ENCODE measurements at regions of chr2 and their contacts with region 1.

Region 1: GRCh38 chr2:241074901-241075540 is 27.1 kb downstream of the MTERF4 start:
- DNase-seq: peak in 1 of 9 experiments; percentile 42
- ATAC-seq: no peak
- H3K4me3 ChIP-seq: no peak overlapping the region
- H3K4me3 Mint-ChIP-seq: no peak overlapping the region
- H3K27ac ChIP-seq: no peak overlapping the region
- H3K27ac Mint-ChIP-seq: peak overlapping the region; percentile 10
- H3K4me1 ChIP-seq: peaks cover 3% of the 10 kb centered on the region
- H3K4me1 Mint-ChIP-seq: peaks cover 13% of the 10 kb centered on the region
- H3K27me3 ChIP-seq: no peaks in the 10 kb centered on the region
- H3K27me3 Mint-ChIP-seq: no peaks in the 10 kb centered on the region
- CTCF ChIP-seq: no peak

Region 2: DNA sequence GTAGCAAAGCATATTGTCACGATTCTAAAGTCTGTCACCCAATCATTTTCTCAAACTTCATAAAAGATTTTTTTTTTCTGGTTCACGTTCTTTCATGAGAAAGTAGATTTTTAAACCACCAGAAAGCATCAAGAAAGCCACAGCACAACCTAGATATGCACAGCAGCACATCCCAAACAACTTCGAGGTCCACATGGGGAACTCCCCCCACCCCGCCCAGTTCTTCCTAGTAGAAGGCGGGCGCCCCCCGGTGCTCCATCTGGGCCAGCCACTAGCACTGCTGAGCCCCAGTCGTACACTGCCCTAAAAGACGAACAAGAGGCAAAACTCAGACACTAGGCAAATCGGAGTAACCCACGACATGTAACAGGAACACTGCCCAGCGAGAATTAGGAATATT is 225.0 kb after region 1 on chr2:
- CTCF ChIA-PET with region 1: no interaction called
- POLR2A ChIA-PET with region 1: no interaction called
- intact Hi-C with region 1: loop called (anchors 1 to 5 kb)
- DNase-seq: peak in 8 of 9 experiments; percentile 22 to 83 (median 68)
- ATAC-seq: peak; percentile 94
- H3K4me3 ChIP-seq: no peak overlapping the region
- H3K4me3 Mint-ChIP-seq: peak overlapping the region; percentile 56
- H3K27ac ChIP-seq: no peak overlapping the region
- H3K27ac Mint-ChIP-seq: peak overlapping the region; percentile 77
- H3K4me1 ChIP-seq: peaks cover 23% of the 10 kb centered on the region
- H3K4me1 Mint-ChIP-seq: peaks cover 66% of the 10 kb centered on the region
- H3K27me3 ChIP-seq: no peaks in the 10 kb centered on the region
- H3K27me3 Mint-ChIP-seq: no peaks in the 10 kb centered on the region
- CTCF ChIP-seq: peak; percentile 37

Region 3: DNA sequence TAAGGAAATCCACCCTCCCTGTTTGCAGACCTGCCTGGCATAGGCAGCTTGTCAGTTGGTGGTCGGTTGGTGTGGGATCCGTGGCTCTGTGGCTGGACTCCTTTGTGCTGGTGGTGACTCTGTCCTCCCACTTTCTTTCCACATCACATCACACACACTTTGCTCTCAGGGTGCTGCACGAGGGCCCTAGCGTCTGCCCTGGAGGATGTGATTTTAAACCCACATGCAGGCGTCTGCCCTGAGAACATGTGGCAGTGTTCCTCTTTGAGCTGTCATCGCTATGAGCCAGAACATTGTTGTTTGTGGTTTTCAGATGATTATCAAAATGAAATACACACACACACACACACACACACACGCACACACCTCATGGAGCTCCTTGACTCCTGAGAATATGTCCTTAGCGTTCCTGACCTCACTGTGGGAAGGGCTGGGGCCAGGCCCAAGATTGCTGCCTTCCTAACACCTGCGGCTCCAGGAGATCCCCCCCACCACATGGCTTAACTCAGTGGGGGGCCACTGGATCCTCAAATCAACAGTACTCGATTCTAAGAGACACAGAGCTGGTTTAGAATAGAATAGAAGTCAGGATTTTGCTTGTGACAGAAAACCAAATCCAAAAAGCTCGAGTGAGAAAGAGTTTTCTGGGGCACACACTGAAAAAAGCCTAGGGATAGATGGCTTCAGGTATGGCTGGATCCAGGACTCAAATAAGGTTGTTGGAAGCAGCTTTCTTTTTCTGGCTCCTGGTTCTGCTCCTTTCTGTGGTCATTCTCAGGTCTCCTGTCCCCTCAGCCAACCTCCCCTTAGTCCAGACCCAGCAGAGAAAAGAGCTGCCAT is 849.3 kb after region 1 on chr2:
- CTCF ChIA-PET with region 1: no interaction called
- POLR2A ChIA-PET with region 1: no interaction called
- intact Hi-C with region 1: no loop called
- DNase-seq: no peak
- ATAC-seq: no peak
- H3K4me3 ChIP-seq: no peak overlapping the region
- H3K4me3 Mint-ChIP-seq: no peak overlapping the region
- H3K27ac ChIP-seq: no peak overlapping the region
- H3K27ac Mint-ChIP-seq: no peak overlapping the region
- H3K4me1 ChIP-seq: no peaks in the 10 kb centered on the region
- H3K4me1 Mint-ChIP-seq: no peaks in the 10 kb centered on the region
- H3K27me3 ChIP-seq: no peaks in the 10 kb centered on the region
- H3K27me3 Mint-ChIP-seq: no peaks in the 10 kb centered on the region
- CTCF ChIP-seq: no peak

Measured in CD8-positive, alpha-beta T cell (primary cell).